Activated naive CD4-positive, alpha-beta T cell treated with anti-CD3 and anti-CD28 coated beads for 36 hours (primary cell): ENCODE measurements at regions of chr3 and their contacts with region 1.

Region 1: GRCh38 chr3:139427283-139427993 is 38.0 kb upstream of the COPB2 start:
- DNase-seq: no peak
- H3K4me3 Mint-ChIP-seq: no peak overlapping the region
- H3K27ac Mint-ChIP-seq: no peak overlapping the region
- H3K4me1 Mint-ChIP-seq: no peaks in the 10 kb centered on the region
- H3K27me3 Mint-ChIP-seq: no peaks in the 10 kb centered on the region

Region 2: DNA sequence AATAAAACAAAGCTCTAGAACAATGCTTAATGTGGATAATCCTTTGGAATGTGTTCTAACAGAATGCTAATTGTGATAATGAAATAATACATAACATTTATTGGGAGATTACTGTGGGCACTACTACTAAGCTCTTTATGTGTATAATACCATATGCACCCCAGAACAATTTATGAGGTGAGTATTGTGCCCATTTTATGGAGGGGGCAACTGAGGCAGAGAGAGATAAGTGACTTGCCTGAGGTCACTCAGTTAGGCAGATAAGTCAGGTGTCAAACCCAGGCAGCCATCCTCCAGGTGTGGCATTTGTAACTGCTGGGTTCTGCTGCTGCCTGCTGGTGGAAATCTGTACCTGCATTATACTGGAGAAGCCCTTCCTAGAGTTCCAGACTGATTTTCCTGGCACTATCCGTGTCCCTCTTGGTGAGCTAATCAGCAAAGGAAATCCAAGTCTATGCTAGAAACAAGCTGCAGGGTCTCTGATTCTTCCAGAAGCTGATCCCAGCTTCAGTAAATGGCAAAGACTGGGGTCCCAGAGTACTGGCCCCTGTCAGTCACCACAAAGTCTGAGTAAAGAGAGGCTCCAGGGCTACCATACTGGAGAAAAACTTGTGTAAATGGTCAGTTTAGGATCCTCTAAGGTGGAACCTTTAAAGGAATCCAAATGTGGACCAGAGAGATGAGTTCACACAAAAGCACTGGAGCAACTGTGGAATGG is 134.7 kb after region 1 on chr3:
- CTCF ChIA-PET with region 1: interaction called, 3 read pairs
- intact Hi-C with region 1: loop called (anchors 1 kb)
- DNase-seq: peak; percentile 18
- H3K4me3 Mint-ChIP-seq: no peak overlapping the region
- H3K27ac Mint-ChIP-seq: no peak overlapping the region
- H3K4me1 Mint-ChIP-seq: no peaks in the 10 kb centered on the region
- H3K27me3 Mint-ChIP-seq: no peaks in the 10 kb centered on the region

Region 3: DNA sequence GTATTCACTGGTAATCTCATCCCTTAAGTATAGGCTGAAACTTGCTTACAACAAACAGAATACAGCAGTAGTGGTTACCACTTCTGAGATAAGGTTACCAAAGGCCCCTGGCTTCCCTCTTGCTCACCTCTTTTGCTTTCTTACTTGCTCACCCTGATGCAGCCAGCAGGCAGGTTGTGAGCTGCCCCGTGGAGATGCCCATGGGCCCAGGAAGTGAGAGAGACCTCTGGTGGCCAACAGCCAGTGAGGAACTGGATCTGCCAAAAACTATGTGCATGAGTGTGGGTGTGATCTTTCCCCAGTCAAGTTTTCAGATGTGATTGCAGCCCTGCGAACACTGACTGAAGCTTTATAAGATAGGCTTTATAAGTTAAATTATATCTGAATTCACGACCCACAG is 201.6 kb after region 1 on chr3:
- CTCF ChIA-PET with region 1: interaction called, 5 read pairs
- intact Hi-C with region 1: loop called (anchors 2 kb)
- DNase-seq: peak; percentile 34
- H3K4me3 Mint-ChIP-seq: no peak overlapping the region
- H3K27ac Mint-ChIP-seq: no peak overlapping the region
- H3K4me1 Mint-ChIP-seq: no peaks in the 10 kb centered on the region
- H3K27me3 Mint-ChIP-seq: no peaks in the 10 kb centered on the region

Region 4: DNA sequence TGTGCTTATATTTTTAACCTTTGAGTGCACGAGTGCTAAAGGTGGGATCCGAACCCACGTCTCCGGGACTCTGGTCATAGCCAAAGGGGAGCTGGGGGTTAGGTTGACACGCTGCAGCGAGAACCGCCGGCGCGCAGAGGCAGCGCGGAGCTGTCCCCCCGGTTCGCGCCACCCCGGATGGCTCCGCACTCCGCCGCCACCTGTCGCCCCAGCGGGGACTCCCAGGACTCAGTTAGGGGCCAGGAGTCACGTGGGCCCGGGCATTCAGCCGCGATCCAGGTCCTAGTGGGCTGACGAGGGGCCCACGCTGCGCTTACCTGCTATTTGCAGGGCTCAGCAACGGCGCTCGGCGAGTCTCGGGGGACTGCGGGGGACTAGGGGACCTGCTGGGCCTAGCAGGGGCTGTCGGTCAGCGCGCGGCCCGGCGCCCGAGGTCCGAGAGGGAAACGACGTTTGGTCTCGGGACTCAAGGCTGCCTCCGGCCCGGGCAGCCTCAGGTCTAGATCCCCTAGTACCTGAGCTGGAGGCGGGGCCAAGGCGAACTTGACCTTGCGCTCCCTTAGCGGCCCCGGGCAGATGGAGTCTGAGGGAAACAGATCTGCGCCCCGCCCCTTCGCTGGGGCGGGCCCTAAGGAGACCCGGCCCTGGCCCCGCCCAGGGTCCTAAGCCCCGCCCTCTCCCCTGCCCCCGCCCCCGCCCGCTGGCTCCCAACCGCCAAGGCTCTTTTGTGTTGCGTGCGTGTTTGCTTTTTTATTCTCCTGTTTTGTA is 250.1 kb after region 1 on chr3 and contains the start of gene NMNAT3:
- CTCF ChIA-PET with region 1: no interaction called
- intact Hi-C with region 1: loop called (anchors 5 kb)
- DNase-seq: peak; percentile 87
- H3K4me3 Mint-ChIP-seq: peak within 1 kb of the TSS; percentile 79
- H3K27ac Mint-ChIP-seq: peak within 1 kb of the TSS; percentile 29
- H3K4me1 Mint-ChIP-seq: peaks cover 10% of the 10 kb centered on the region
- H3K27me3 Mint-ChIP-seq: no peaks in the 10 kb centered on the region
- total RNA-seq, gene NMNAT3: 6.2 to 7.6 TPM

Region 5: DNA sequence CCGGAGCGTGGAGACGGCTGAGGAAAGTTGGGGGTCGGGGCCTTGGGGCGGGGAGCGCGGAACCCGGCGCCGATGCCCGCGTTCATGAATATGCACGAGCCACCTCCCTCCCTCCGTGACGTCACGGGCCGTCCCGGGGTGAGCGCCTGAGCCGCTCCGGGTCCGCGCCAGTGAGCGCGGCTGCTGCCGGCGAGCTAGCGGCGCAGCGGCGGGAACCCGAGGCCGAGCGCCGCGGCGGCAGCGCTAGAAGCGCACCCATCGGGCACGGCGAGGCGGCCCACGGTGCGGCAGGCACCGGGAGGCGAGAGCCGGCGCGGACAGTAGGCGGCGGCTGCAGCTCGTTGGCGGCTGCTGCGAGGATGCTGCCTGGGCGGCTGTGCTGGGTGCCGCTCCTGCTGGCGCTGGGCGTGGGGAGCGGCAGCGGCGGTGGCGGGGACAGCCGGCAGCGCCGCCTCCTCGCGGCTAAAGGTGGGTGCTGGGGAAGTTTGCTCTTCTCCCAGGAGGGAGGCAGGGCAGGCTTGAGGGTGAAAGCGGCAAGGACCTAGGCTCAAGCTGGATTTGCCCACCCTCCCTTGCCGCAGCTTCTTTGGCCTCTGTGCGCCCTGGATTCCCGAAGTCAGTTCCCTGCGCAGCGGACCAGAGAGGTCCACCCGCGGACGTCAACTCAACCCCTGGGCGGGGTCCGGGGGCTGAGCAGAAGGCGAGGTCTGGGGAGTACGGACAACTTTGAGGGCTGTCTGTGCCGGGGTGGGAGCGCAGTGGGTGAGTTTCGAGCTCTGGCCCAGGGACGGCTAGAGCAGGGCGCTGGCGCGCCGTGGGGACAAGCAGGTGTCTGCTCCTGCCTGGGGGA is 507.8 kb after region 1 on chr3 and contains the start of gene CLSTN2:
- CTCF ChIA-PET with region 1: no interaction called
- intact Hi-C with region 1: loop called (anchors 2 kb)
- DNase-seq: peak; percentile 23
- H3K4me3 Mint-ChIP-seq: no peak within 1 kb of the TSS
- H3K27ac Mint-ChIP-seq: no peak within 1 kb of the TSS
- H3K4me1 Mint-ChIP-seq: peaks cover 2% of the 10 kb centered on the region
- H3K27me3 Mint-ChIP-seq: peaks cover 45% of the 10 kb centered on the region
- total RNA-seq, gene CLSTN2: not detected

Region 6: DNA sequence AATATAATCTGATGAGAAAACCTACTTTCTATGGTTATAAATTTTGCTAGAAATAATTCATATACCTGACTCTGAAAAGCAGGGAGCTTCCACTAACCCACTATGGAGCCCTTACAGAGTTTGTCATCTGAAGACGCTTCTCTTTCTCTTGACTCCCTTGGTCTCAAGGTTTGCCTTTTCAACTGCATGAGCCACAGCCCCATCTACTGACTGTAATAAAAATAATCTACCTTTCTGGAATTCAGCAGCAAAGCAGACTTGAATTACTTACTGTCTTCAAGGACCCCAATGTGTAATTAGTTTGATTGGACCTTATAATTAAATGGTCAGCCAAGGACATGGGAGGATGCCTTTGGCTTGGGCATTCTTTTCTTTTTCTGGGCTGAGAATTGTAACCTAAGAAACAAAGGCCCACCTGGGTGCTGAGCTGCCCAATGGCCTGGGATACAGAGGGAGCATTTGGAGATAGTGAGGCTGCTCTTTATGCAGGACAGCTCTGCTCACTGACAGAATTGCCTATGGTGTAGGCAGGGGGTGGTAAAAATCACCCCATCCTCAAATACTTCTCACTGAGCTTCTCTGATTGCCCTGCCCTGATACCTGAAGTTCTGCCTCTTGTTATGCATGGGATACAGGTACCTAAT is 1071.8 kb after region 1 on chr3:
- CTCF ChIA-PET with region 1: no interaction called
- intact Hi-C with region 1: loop called (anchors 5 kb)
- DNase-seq: no peak
- H3K4me3 Mint-ChIP-seq: no peak overlapping the region
- H3K27ac Mint-ChIP-seq: no peak overlapping the region
- H3K4me1 Mint-ChIP-seq: no peaks in the 10 kb centered on the region
- H3K27me3 Mint-ChIP-seq: no peaks in the 10 kb centered on the region

Region 7: GRCh38 chr3:140863580-140864009 is 1436.2 kb after region 1 on chr3:
- CTCF ChIA-PET with region 1: no interaction called
- intact Hi-C with region 1: loop called (anchors 1 kb)
- DNase-seq: peak; percentile 73
- H3K4me3 Mint-ChIP-seq: no peak overlapping the region
- H3K27ac Mint-ChIP-seq: no peak overlapping the region
- H3K4me1 Mint-ChIP-seq: no peaks in the 10 kb centered on the region
- H3K27me3 Mint-ChIP-seq: peaks cover 2% of the 10 kb centered on the region